ENCODE measurements at regions of chr9 and their contacts with region 1.

Region 1: DNA sequence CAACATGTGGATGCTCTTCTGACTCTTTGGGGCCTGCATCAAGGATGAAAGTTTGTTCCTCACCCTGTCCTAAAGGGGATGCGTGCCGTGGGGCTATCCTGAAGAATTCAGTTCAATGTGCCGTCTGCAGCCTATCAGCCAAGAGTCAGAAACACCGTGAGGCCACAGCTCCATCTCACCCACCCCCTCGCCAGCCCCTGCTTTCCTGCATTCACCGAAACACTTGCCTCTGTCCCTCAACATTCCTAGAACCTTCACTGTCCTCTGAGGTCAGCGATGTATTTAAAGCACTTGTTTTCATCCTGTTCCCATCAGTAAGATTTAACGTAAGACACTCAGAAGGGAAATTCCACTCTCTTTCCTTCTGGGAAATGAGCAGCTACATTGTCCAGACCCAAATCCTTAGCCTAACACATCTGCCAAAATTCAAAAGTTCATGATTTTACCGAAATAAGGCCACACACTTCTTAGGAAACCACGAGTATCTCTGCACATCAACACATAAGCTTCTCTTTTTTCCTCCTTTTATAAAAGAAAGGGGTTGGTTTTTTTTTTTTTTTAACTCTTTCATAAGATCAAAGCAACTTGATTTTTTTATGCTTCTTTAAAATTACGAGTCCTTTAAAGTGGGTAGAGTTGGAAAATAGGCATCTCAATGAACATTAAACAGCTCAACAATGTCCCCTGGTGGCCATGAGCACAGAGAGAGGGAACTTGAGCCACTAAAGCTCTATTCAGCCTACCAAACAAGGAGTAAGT is 100.7 kb downstream of the SUSD1 start:
- DNase-seq: peak; percentile 62 to 68
- H3K4me3 ChIP-seq: no peak overlapping the region
- H3K4me3 Mint-ChIP-seq: no peak overlapping the region
- H3K27ac Mint-ChIP-seq: no peak overlapping the region
- H3K4me1 ChIP-seq: peaks cover 46% of the 10 kb centered on the region
- H3K4me1 Mint-ChIP-seq: peaks cover 20% of the 10 kb centered on the region
- H3K27me3 ChIP-seq: no peaks in the 10 kb centered on the region
- H3K27me3 Mint-ChIP-seq: no peaks in the 10 kb centered on the region
- CTCF ChIP-seq: peak; percentile 82 to 96

Region 2: GRCh38 chr9:111759762-111760639 is 314.4 kb before region 1 on chr9:
- CTCF ChIA-PET with region 1: interaction called, 12 read pairs
- POLR2A ChIA-PET with region 1: interaction called, 4 read pairs
- intact Hi-C with region 1: loop called (anchors 1 kb)
- DNase-seq: peak; percentile 54 to 70
- H3K4me3 ChIP-seq: no peak overlapping the region
- H3K4me3 Mint-ChIP-seq: no peak overlapping the region
- H3K27ac Mint-ChIP-seq: no peak overlapping the region
- H3K4me1 ChIP-seq: no peaks in the 10 kb centered on the region
- H3K4me1 Mint-ChIP-seq: no peaks in the 10 kb centered on the region
- H3K27me3 ChIP-seq: no peaks in the 10 kb centered on the region
- H3K27me3 Mint-ChIP-seq: no peaks in the 10 kb centered on the region
- CTCF ChIP-seq: peak; percentile 48 to 77

Region 3: GRCh38 chr9:111828193-111828592 is 246.2 kb before region 1 on chr9:
- CTCF ChIA-PET with region 1: no interaction called
- POLR2A ChIA-PET with region 1: no interaction called
- intact Hi-C with region 1: loop called (anchors 2 kb)
- DNase-seq: peak in 1 of 2 experiments; percentile 22
- H3K4me3 ChIP-seq: no peak overlapping the region
- H3K4me3 Mint-ChIP-seq: no peak overlapping the region
- H3K27ac Mint-ChIP-seq: no peak overlapping the region
- H3K4me1 ChIP-seq: no peaks in the 10 kb centered on the region
- H3K4me1 Mint-ChIP-seq: no peaks in the 10 kb centered on the region
- H3K27me3 ChIP-seq: no peaks in the 10 kb centered on the region
- H3K27me3 Mint-ChIP-seq: no peaks in the 10 kb centered on the region
- CTCF ChIP-seq: peak in 1 of 2 experiments; percentile 6

Region 4: DNA sequence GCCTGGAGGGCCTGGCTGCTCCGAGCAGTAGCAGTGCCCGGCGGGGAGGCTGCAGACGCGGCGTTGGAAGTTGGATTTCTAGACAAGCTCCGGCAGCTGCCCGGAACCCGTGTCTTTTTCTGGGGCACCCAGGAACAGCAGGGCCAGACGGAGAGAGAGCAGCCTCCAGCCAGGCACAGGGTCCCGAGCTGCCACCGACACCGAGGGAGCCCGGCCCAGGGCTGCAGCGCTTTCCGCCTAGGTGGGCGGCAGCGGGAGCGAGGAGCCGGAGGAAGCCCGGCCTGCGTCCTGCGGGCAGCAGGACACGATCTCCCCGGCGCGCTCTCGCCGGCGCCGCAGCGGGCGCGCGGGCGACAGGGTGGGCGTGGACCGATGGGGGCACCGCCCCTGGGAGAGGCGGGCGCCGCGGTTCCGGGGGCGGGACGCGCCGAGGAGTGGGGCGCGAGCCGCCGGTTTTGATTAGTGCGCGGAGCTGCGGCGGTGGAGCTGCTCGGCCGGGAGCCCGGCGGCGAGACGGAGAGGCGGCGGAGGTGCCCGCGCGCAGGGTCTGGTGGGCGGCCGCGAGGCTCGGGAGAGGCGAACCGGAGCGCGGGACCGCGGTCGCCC is 178.0 kb before region 1 on chr9 and contains the start of gene UGCG:
- CTCF ChIA-PET with region 1: no interaction called
- POLR2A ChIA-PET with region 1: no interaction called
- intact Hi-C with region 1: loop called (anchors 2 kb)
- DNase-seq: peak; percentile 89 to 94
- H3K4me3 ChIP-seq: peak within 1 kb of the TSS; percentile 78
- H3K4me3 Mint-ChIP-seq: no peak within 1 kb of the TSS
- H3K27ac Mint-ChIP-seq: peak within 1 kb of the TSS; percentile 94
- H3K4me1 ChIP-seq: peaks cover 33% of the 10 kb centered on the region
- H3K4me1 Mint-ChIP-seq: no peaks in the 10 kb centered on the region
- H3K27me3 ChIP-seq: no peaks in the 10 kb centered on the region
- H3K27me3 Mint-ChIP-seq: no peaks in the 10 kb centered on the region
- CTCF ChIP-seq: no peak
- total RNA-seq, gene UGCG: 25.0 and 26.7 TPM in 2 replicates

Region 5: DNA sequence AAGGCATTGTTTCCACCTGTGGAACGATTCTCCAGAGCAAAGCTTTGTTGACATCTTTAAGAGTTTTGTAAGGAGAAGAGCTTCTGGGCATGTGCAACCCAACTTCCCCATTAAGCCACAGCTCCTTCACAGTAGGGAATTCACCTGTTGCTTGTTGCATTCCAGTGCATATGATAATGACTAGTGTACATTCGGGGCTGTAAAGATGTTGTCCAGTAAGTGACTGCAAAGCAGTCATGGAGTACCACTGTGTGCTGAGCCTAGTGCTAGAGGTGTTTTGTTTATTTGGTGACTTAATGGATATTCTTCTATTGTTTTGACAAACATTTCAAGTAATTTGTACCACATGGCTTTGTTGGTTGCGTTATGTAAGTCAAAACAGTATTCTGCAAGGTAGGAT is 165.0 kb before region 1 on chr9:
- CTCF ChIA-PET with region 1: no interaction called
- POLR2A ChIA-PET with region 1: no interaction called
- intact Hi-C with region 1: no loop called
- DNase-seq: no peak
- H3K4me3 ChIP-seq: no peak overlapping the region
- H3K4me3 Mint-ChIP-seq: no peak overlapping the region
- H3K27ac Mint-ChIP-seq: no peak overlapping the region
- H3K4me1 ChIP-seq: peaks cover 15% of the 10 kb centered on the region; the same call in 1 of the 2 replicates
- H3K4me1 Mint-ChIP-seq: peaks cover 14% of the 10 kb centered on the region
- H3K27me3 ChIP-seq: no peaks in the 10 kb centered on the region
- H3K27me3 Mint-ChIP-seq: no peaks in the 10 kb centered on the region
- CTCF ChIP-seq: no peak

Region 6: GRCh38 chr9:111975709-111976108 is 98.7 kb before region 1 on chr9:
- CTCF ChIA-PET with region 1: interaction called, 3 read pairs
- POLR2A ChIA-PET with region 1: no interaction called
- intact Hi-C with region 1: loop called (anchors 2 kb)
- DNase-seq: peak; percentile 45 to 64
- H3K4me3 ChIP-seq: no peak overlapping the region
- H3K4me3 Mint-ChIP-seq: no peak overlapping the region
- H3K27ac Mint-ChIP-seq: no peak overlapping the region
- H3K4me1 ChIP-seq: peaks cover 47% of the 10 kb centered on the region
- H3K4me1 Mint-ChIP-seq: peaks cover 31% of the 10 kb centered on the region
- H3K27me3 ChIP-seq: no peaks in the 10 kb centered on the region
- H3K27me3 Mint-ChIP-seq: no peaks in the 10 kb centered on the region
- CTCF ChIP-seq: peak in 1 of 2 experiments; percentile 21

Region 7: GRCh38 chr9:112041536-112042243 is 32.7 kb before region 1 on chr9:
- CTCF ChIA-PET with region 1: no interaction called
- POLR2A ChIA-PET with region 1: no interaction called
- intact Hi-C with region 1: no loop called
- DNase-seq: peak; percentile 60 to 82
- H3K4me3 ChIP-seq: no peak overlapping the region
- H3K4me3 Mint-ChIP-seq: peak overlapping the region; percentile 39
- H3K27ac Mint-ChIP-seq: peak overlapping the region; percentile 88
- H3K4me1 ChIP-seq: peaks cover 44% of the 10 kb centered on the region
- H3K4me1 Mint-ChIP-seq: peaks cover 17% of the 10 kb centered on the region
- H3K27me3 ChIP-seq: no peaks in the 10 kb centered on the region
- H3K27me3 Mint-ChIP-seq: no peaks in the 10 kb centered on the region
- CTCF ChIP-seq: no peak

Region 8: DNA sequence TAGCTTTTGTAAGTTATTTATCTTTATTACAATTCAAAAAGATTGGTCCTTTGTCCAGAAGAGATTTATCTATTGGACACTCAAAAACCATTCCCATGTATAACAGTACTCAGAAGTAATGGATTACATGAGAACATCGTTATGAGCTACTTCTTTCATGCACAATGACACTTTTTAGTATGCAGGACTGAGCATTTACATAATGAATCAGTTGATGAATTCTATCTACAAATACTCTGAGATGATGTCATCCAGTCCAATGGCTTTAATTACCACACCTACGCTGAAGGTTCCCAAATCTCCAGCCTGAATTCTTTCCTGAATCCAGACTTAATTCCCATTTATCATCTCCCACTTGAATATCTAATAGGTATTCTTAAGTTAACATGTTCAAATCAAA is 183.7 kb after region 1 on chr9:
- CTCF ChIA-PET with region 1: no interaction called
- POLR2A ChIA-PET with region 1: no interaction called
- intact Hi-C with region 1: no loop called
- DNase-seq: no peak
- H3K4me3 ChIP-seq: no peak overlapping the region
- H3K4me3 Mint-ChIP-seq: no peak overlapping the region
- H3K27ac Mint-ChIP-seq: no peak overlapping the region
- H3K4me1 ChIP-seq: no peaks in the 10 kb centered on the region
- H3K4me1 Mint-ChIP-seq: peaks cover 6% of the 10 kb centered on the region
- H3K27me3 ChIP-seq: no peaks in the 10 kb centered on the region
- H3K27me3 Mint-ChIP-seq: no peaks in the 10 kb centered on the region
- CTCF ChIP-seq: no peak

Measured in Caco-2 (cell line).